ENCODE measurements at regions of chr4 and their contacts with region 1.

Region 1: GRCh38 chr4:152870606-152871005 is 65.5 kb upstream of the FHDC1 start:
- DNase-seq: no peak
- H3K4me3 Mint-ChIP-seq: no peak overlapping the region
- H3K27ac Mint-ChIP-seq: no peak overlapping the region
- H3K4me1 Mint-ChIP-seq: no peaks in the 10 kb centered on the region
- H3K27me3 Mint-ChIP-seq: no peaks in the 10 kb centered on the region

Region 2: DNA sequence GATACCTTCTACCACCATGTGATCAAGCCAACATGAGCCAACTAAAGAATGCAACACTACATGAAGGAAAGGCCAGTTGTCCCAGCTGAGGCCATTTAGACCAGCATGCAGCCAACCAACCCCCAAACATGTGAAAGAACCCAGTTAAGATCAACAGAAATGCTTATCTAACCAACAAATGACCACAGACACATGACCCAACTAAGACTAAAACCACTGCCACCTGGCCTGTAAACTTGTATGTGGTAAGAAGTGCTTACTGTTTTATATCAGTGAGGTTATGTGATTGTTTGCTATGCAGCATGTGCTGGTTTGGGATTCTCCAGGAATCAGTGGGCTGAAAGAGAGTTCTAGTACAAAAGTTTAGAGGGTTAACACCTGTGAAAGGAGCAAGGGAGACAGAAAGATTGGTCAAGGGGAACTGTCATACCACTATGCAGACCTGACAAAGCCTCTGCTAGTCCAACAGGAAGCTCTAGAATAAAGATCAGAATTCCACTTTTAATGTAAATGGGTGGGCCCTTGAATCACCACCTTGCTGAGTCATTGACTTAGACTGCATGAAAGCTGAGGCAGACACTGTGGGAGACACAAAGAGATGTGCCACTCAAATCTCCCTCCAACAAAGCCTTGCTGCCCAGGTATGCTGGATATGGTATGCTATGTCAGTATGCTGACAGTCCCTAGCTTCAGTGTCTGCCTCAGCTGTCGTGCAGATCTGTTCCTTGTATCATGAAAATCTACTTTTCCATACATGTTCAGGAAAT is 1539.1 kb before region 1 on chr4:
- CTCF ChIA-PET with region 1: no interaction called
- POLR2A ChIA-PET with region 1: no interaction called
- intact Hi-C with region 1: no loop called
- DNase-seq: no peak
- H3K4me3 Mint-ChIP-seq: no peak overlapping the region
- H3K27ac Mint-ChIP-seq: no peak overlapping the region
- H3K4me1 Mint-ChIP-seq: no peaks in the 10 kb centered on the region
- H3K27me3 Mint-ChIP-seq: peaks cover 9% of the 10 kb centered on the region

Region 3: DNA sequence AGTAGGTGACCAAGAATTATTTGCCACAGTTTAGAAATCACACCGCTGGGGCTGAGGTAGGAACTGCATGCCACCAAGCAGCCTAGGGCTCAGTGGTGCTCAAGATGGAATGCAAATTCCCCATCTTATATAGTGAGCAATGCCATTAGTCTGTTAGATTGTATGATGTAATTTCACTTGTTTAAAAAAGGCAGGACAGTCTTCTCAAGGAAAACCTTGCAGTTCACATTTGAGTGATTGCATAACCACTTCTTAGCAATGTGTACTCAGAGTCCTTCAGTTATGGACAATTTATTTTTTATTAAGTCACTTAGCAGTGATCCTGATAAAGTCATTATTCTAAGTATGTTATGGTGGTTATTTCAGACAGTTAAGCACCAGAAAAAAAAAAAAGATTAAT is 1061.2 kb after region 1 on chr4:
- CTCF ChIA-PET with region 1: no interaction called
- POLR2A ChIA-PET with region 1: no interaction called
- intact Hi-C with region 1: loop called (anchors 5 kb)
- DNase-seq: no peak
- H3K4me3 Mint-ChIP-seq: no peak overlapping the region
- H3K27ac Mint-ChIP-seq: no peak overlapping the region
- H3K4me1 Mint-ChIP-seq: no peaks in the 10 kb centered on the region
- H3K27me3 Mint-ChIP-seq: peaks cover 21% of the 10 kb centered on the region

Measured in activated CD4-positive, alpha-beta memory T cell treated with anti-CD3 and anti-CD28 coated beads for 36 hours (primary cell).